Natural killer cell (primary cell): ENCODE measurements at regions of chr11 and their contacts with region 1.

Region 1: DNA sequence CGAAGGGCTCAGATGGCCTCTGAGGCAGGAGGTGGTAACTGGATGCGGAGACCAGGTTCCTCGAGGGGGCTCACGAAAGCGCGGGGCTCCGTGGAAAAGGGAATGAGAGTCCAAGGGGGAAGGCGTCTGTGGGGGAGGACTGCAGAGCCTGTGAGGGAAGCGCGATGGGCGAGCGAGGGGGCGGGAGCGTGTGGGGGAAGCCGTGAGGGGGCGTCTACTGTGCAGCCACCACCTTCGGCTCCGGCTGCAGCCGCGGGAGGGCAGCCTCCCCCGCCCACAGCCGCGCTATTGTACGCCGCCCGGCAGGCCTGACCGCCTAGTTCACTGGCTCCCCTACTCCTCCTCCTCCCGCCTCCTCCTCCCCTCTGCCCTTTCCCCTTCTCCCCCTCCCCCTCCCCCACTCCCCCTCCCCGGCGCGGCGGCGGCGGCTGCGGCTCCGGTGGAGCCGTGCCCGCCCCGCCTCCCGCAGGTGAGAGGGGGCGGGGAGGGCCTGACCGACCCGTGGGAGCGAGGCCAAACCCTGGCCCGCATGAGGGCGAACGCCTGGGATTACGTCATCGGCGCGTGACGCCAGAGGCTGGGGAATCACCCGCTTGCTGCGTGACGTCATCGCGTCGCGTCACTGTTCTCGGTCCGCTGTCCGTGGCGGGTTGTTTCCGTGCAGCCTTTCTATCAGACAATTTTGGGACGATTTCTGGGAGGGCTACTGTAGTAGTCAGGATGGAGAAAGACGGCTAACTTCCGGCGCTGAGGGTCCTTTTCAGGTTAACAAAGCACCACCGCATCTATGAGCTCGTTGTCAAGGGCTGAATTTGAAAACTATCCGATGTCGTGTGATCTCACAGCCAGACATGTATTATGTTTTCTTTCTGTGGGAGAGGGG is at the start of gene PAK1:
- DNase-seq: peak; percentile 96 to 100
- ATAC-seq: peak; percentile 76 to 89 (median 81)
- H3K4me3 ChIP-seq: peak within 1 kb of the TSS; percentile 72
- H3K4me3 Mint-ChIP-seq: peak within 1 kb of the TSS; percentile 89
- H3K27ac ChIP-seq: peak within 1 kb of the TSS; percentile 67
- H3K27ac Mint-ChIP-seq: peak within 1 kb of the TSS; percentile 91 to 97
- H3K4me1 ChIP-seq: peaks cover 11% of the 10 kb centered on the region
- H3K4me1 Mint-ChIP-seq: peaks cover 5 to 10% of the 10 kb centered on the region in 2 donors
- H3K27me3 ChIP-seq: peaks cover 3% of the 10 kb centered on the region
- H3K27me3 Mint-ChIP-seq: peaks cover 0 to 3% of the 10 kb centered on the region in 2 donors
- CTCF ChIP-seq: no peak
- total RNA-seq, gene PAK1: 18.8 to 27.3 (median 20.4) TPM

Region 2: GRCh38 chr11:77487790-77488189 is 13.7 kb after region 1 on chr11:
- intact Hi-C with region 1: no loop called
- DNase-seq: no peak
- ATAC-seq: no peak
- H3K4me3 ChIP-seq: no peak overlapping the region
- H3K4me3 Mint-ChIP-seq: no peak overlapping the region
- H3K27ac ChIP-seq: no peak overlapping the region
- H3K27ac Mint-ChIP-seq: no peak overlapping the region
- H3K4me1 ChIP-seq: no peaks in the 10 kb centered on the region
- H3K4me1 Mint-ChIP-seq: no peaks in the 10 kb centered on the region
- H3K27me3 ChIP-seq: no peaks in the 10 kb centered on the region
- H3K27me3 Mint-ChIP-seq: peaks cover 12 to 15% of the 10 kb centered on the region in 2 donors
- CTCF ChIP-seq: no peak

Region 3: GRCh38 chr11:77547863-77548551 is 74.0 kb after region 1 on chr11:
- intact Hi-C with region 1: loop called (anchors 5 kb)
- DNase-seq: peak in 1 of 2 donors; percentile 75
- ATAC-seq: peak in 2 of 3 donors; percentile 49 to 53
- H3K4me3 ChIP-seq: no peak overlapping the region
- H3K4me3 Mint-ChIP-seq: no peak overlapping the region
- H3K27ac ChIP-seq: no peak overlapping the region
- H3K27ac Mint-ChIP-seq: no peak overlapping the region
- H3K4me1 ChIP-seq: no peaks in the 10 kb centered on the region
- H3K4me1 Mint-ChIP-seq: peaks cover 7 to 9% of the 10 kb centered on the region in 2 donors
- H3K27me3 ChIP-seq: no peaks in the 10 kb centered on the region
- H3K27me3 Mint-ChIP-seq: no peaks in the 10 kb centered on the region
- CTCF ChIP-seq: peak; percentile 59